CD14-positive monocyte (primary cell): ENCODE measurements at regions of chr3 and their contacts with region 1.

Region 1: GRCh38 chr3:193572426-193572908 is 17.8 kb upstream of the ATP13A4 start:
- DNase-seq: peak; percentile 30 to 43 (median 38)
- H3K4me3 ChIP-seq: no peak overlapping the region
- H3K4me3 Mint-ChIP-seq: no peak overlapping the region
- H3K27ac ChIP-seq: no peak overlapping the region
- H3K27ac Mint-ChIP-seq: no peak overlapping the region
- H3K4me1 ChIP-seq: no peaks in the 10 kb centered on the region
- H3K4me1 Mint-ChIP-seq: peaks cover 5% of the 10 kb centered on the region
- H3K27me3 ChIP-seq: no peaks in the 10 kb centered on the region
- H3K27me3 Mint-ChIP-seq: peaks cover 0 to 3% (median 2%) of the 10 kb centered on the region in 3 donors
- CTCF ChIP-seq: peak; percentile 86

Region 2: DNA sequence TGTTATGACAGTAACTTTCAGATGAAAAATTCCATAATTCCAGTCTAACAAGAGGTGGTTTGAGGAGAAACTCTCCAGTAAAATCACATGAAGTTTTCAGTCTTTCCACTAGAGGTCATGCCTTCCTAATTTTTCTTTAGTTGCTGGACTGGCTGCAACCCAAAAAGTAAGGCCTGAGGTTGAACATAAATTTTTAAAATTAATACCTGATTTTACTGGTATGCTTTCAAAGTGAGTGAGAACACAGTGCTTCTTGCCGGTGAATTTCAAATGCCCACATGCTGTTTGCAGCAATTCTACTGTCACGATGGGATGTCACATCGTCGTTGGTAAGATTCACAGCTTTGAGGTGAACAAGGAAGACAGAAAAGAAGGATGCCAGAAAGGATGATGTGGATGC is 756.1 kb before region 1 on chr3:
- intact Hi-C with region 1: loop called (anchors 5 to 10 kb)
- DNase-seq: peak; percentile 13 to 48 (median 33)
- H3K4me3 ChIP-seq: no peak overlapping the region
- H3K4me3 Mint-ChIP-seq: no peak overlapping the region
- H3K27ac ChIP-seq: no peak overlapping the region
- H3K27ac Mint-ChIP-seq: no peak overlapping the region
- H3K4me1 ChIP-seq: no peaks in the 10 kb centered on the region
- H3K4me1 Mint-ChIP-seq: no peaks in the 10 kb centered on the region
- H3K27me3 ChIP-seq: no peaks in the 10 kb centered on the region
- H3K27me3 Mint-ChIP-seq: peaks cover 3 to 9% (median 7%) of the 10 kb centered on the region in 3 donors
- CTCF ChIP-seq: peak; percentile 80

Region 3: DNA sequence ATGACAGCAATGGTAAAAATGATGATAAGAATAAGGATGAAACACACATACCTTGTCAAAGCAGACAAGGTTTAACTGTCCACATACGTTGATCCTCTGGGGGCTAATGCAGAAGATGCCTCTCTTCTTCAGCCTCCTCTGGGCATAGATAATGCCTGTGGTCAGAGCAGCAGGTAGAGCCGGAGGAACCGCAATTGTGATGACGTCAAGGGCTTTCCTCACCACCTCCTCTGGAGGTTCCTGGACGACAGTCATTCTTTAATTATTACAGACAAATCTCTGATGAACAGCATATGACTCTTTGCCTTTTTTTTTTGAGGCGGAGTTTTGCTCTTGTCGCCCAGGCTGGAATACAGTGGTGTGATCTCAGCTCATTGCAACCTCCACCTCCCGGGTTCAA is 107.6 kb before region 1 on chr3:
- intact Hi-C with region 1: loop called (anchors 5 kb)
- DNase-seq: no peak
- H3K4me3 ChIP-seq: no peak overlapping the region
- H3K4me3 Mint-ChIP-seq: no peak overlapping the region
- H3K27ac ChIP-seq: no peak overlapping the region
- H3K27ac Mint-ChIP-seq: no peak overlapping the region
- H3K4me1 ChIP-seq: no peaks in the 10 kb centered on the region
- H3K4me1 Mint-ChIP-seq: peaks cover 3% of the 10 kb centered on the region
- H3K27me3 ChIP-seq: no peaks in the 10 kb centered on the region
- H3K27me3 Mint-ChIP-seq: peaks cover 2 to 3% (median 2%) of the 10 kb centered on the region in 3 donors
- CTCF ChIP-seq: no peak